Caco-2 (cell line): ENCODE measurements at regions of chr20 and their contacts with region 1.

Region 1: GRCh38 chr20:58372806-58373205 is 16.2 kb upstream of the VAPB start:
- DNase-seq: peak; percentile 91 to 95
- H3K4me3 ChIP-seq: no peak overlapping the region
- H3K4me3 Mint-ChIP-seq: peak overlapping the region; percentile 49
- H3K27ac Mint-ChIP-seq: peak overlapping the region; percentile 68
- H3K4me1 ChIP-seq: peaks cover 29% of the 10 kb centered on the region
- H3K4me1 Mint-ChIP-seq: peaks cover 37% of the 10 kb centered on the region
- H3K27me3 ChIP-seq: no peaks in the 10 kb centered on the region
- H3K27me3 Mint-ChIP-seq: no peaks in the 10 kb centered on the region
- CTCF ChIP-seq: no peak

Region 2: GRCh38 chr20:58236612-58237330 is 136.0 kb before region 1 on chr20:
- CTCF ChIA-PET with region 1: no interaction called
- POLR2A ChIA-PET with region 1: no interaction called
- intact Hi-C with region 1: loop called (anchors 2 kb)
- DNase-seq: peak; percentile 77 to 92
- H3K4me3 ChIP-seq: peak overlapping the region; percentile 40
- H3K4me3 Mint-ChIP-seq: peak overlapping the region; percentile 83
- H3K27ac Mint-ChIP-seq: no peak overlapping the region
- H3K4me1 ChIP-seq: no peaks in the 10 kb centered on the region
- H3K4me1 Mint-ChIP-seq: peaks cover 5% of the 10 kb centered on the region
- H3K27me3 ChIP-seq: peaks cover 5% of the 10 kb centered on the region; the same call in 1 of the 2 replicates
- H3K27me3 Mint-ChIP-seq: peaks cover 33% of the 10 kb centered on the region
- CTCF ChIP-seq: peak; percentile 99 to 100

Region 3: GRCh38 chr20:58309575-58310290 is 63.1 kb before region 1 on chr20 and contains the start of gene RAB22A:
- CTCF ChIA-PET with region 1: interaction called, 3 read pairs
- POLR2A ChIA-PET with region 1: no interaction called
- intact Hi-C with region 1: loop called (anchors 1 kb)
- DNase-seq: peak; percentile 81 to 93
- H3K4me3 ChIP-seq: peak within 1 kb of the TSS; percentile 94
- H3K4me3 Mint-ChIP-seq: peak within 1 kb of the TSS; percentile 97
- H3K27ac Mint-ChIP-seq: peak within 1 kb of the TSS; percentile 92
- H3K4me1 ChIP-seq: peaks cover 13% of the 10 kb centered on the region; the same call in 1 of the 2 replicates
- H3K4me1 Mint-ChIP-seq: peaks cover 14% of the 10 kb centered on the region
- H3K27me3 ChIP-seq: no peaks in the 10 kb centered on the region
- H3K27me3 Mint-ChIP-seq: no peaks in the 10 kb centered on the region
- CTCF ChIP-seq: no peak
- total RNA-seq, gene RAB22A: 24.1 and 25.7 TPM in 2 replicates

Region 4: DNA sequence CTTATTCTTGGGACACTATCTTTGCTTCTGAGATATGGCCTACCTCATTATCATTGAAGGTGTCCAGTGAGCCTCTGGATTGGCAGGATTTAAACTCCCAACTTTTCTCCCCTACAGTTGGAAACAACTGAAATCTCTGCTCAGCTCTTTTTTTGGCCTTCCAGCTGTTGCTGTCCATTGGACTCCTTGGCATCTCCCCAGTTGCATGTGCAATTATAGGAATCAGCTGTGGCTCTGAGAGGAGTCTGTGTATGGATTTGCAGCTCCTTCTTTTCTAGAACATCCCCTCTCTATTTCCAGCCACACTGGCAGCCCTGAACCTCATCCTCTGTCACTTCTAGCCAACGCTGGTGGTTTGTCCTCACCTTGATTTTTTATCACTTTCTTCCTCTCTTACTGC is 42.1 kb before region 1 on chr20:
- CTCF ChIA-PET with region 1: no interaction called
- POLR2A ChIA-PET with region 1: no interaction called
- intact Hi-C with region 1: loop called (anchors 2 kb)
- DNase-seq: no peak
- H3K4me3 ChIP-seq: no peak overlapping the region
- H3K4me3 Mint-ChIP-seq: no peak overlapping the region
- H3K27ac Mint-ChIP-seq: no peak overlapping the region
- H3K4me1 ChIP-seq: peaks cover 10% of the 10 kb centered on the region
- H3K4me1 Mint-ChIP-seq: peaks cover 31% of the 10 kb centered on the region
- H3K27me3 ChIP-seq: no peaks in the 10 kb centered on the region
- H3K27me3 Mint-ChIP-seq: no peaks in the 10 kb centered on the region
- CTCF ChIP-seq: no peak

Region 5: DNA sequence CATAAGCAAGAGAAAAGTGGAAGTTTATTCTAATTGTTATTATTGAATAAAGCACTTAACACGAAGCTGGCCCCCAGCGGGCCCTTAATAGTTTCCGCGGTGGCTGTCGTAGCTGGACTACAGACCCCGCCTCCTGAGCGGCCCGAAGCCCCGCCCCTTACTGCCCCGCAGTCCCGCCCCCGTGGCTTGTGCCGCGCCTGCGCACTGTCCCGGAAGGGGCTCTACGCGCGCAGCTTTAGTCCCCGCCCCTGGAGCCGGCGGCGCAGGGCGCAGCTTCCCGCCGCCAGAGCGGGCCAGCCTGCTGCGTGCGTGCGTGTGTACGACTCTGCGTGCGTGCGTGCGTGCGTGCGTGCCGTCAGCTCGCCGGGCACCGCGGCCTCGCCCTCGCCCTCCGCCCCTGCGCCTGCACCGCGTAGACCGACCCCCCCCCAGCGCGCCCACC is 16.1 kb after region 1 on chr20 and contains the start of gene VAPB:
- CTCF ChIA-PET with region 1: interaction called, 5 read pairs
- POLR2A ChIA-PET with region 1: interaction called, 8 read pairs
- intact Hi-C with region 1: loop called (anchors 1 kb)
- DNase-seq: peak; percentile 98 to 100
- H3K4me3 ChIP-seq: peak within 1 kb of the TSS; percentile 74
- H3K4me3 Mint-ChIP-seq: peak within 1 kb of the TSS; percentile 86
- H3K27ac Mint-ChIP-seq: peak within 1 kb of the TSS; percentile 88
- H3K4me1 ChIP-seq: peaks cover 22% of the 10 kb centered on the region
- H3K4me1 Mint-ChIP-seq: peaks cover 36% of the 10 kb centered on the region
- H3K27me3 ChIP-seq: no peaks in the 10 kb centered on the region
- H3K27me3 Mint-ChIP-seq: no peaks in the 10 kb centered on the region
- CTCF ChIP-seq: no peak
- total RNA-seq, gene VAPB: 182 and 186 TPM in 2 replicates

Region 6: GRCh38 chr20:58447511-58448391 is 74.9 kb after region 1 on chr20:
- CTCF ChIA-PET with region 1: no interaction called
- POLR2A ChIA-PET with region 1: interaction called, 3 read pairs
- intact Hi-C with region 1: loop called (anchors 1 kb)
- DNase-seq: peak; percentile 87 to 89
- H3K4me3 ChIP-seq: no peak overlapping the region
- H3K4me3 Mint-ChIP-seq: no peak overlapping the region
- H3K27ac Mint-ChIP-seq: no peak overlapping the region
- H3K4me1 ChIP-seq: no peaks in the 10 kb centered on the region
- H3K4me1 Mint-ChIP-seq: peaks cover 6% of the 10 kb centered on the region
- H3K27me3 ChIP-seq: no peaks in the 10 kb centered on the region
- H3K27me3 Mint-ChIP-seq: no peaks in the 10 kb centered on the region
- CTCF ChIP-seq: peak; percentile 97